Activated CD8-positive, alpha-beta T cell treated with anti-CD3 and anti-CD28 coated beads, Interleukin-2, amount 10 ng/mL, durations not matched to agents 7 days and 5 days (primary cell): ENCODE measurements at regions of chr3 and their contacts with region 1.

Region 1: DNA sequence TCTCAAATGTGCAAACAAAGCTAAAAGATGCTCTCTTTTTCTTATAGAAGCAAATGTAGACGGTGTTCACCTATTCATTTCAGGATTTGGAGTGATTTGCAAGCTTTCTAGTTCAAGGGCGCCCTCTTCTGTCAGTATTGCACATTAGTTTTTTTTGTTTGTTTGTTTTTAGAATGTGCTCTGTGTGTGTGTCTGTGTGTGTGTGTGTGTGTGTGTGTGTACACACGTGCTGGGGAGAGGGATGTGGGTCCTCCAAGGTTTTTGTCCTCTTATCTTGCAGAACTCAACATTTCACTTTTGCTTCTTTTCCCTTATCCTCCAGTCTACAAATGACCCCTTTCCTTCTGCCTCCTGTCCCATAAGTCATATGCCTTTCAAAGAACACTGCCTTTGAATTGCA is 23.5 kb downstream of the DNAH1 start:
- DNase-seq: peak; percentile 70
- ATAC-seq: peak; percentile 71
- H3K4me3 Mint-ChIP-seq: no peak overlapping the region
- H3K27ac Mint-ChIP-seq: no peak overlapping the region
- H3K4me1 Mint-ChIP-seq: peaks cover 5% of the 10 kb centered on the region
- H3K27me3 Mint-ChIP-seq: no peaks in the 10 kb centered on the region

Region 2: GRCh38 chr3:52231502-52232293 is 107.9 kb before region 1 on chr3:
- CTCF ChIA-PET with region 1: interaction called, 98 read pairs
- POLR2A ChIA-PET with region 1: interaction called, 4 read pairs
- DNase-seq: peak; percentile 89
- ATAC-seq: peak; percentile 88
- H3K4me3 Mint-ChIP-seq: peak overlapping the region; percentile 38
- H3K27ac Mint-ChIP-seq: peak overlapping the region; percentile 77
- H3K4me1 Mint-ChIP-seq: peaks cover 62% of the 10 kb centered on the region
- H3K27me3 Mint-ChIP-seq: no peaks in the 10 kb centered on the region

Region 3: GRCh38 chr3:52253314-52254304 is 86.0 kb before region 1 on chr3:
- CTCF ChIA-PET with region 1: interaction called, 14 read pairs
- POLR2A ChIA-PET with region 1: interaction called, 3 read pairs
- DNase-seq: peak; percentile 90
- ATAC-seq: peak; percentile 88
- H3K4me3 Mint-ChIP-seq: peak overlapping the region; percentile 77
- H3K27ac Mint-ChIP-seq: peak overlapping the region; percentile 99
- H3K4me1 Mint-ChIP-seq: peaks cover 95% of the 10 kb centered on the region
- H3K27me3 Mint-ChIP-seq: no peaks in the 10 kb centered on the region

Region 4: GRCh38 chr3:52291508-52292181 is 48.0 kb before region 1 on chr3:
- CTCF ChIA-PET with region 1: interaction called, 102 read pairs
- POLR2A ChIA-PET with region 1: interaction called, 5 read pairs
- DNase-seq: peak; percentile 70
- ATAC-seq: peak; percentile 23
- H3K4me3 Mint-ChIP-seq: no peak overlapping the region
- H3K27ac Mint-ChIP-seq: peak overlapping the region; percentile 78
- H3K4me1 Mint-ChIP-seq: peaks cover 34% of the 10 kb centered on the region
- H3K27me3 Mint-ChIP-seq: no peaks in the 10 kb centered on the region

Region 5: DNA sequence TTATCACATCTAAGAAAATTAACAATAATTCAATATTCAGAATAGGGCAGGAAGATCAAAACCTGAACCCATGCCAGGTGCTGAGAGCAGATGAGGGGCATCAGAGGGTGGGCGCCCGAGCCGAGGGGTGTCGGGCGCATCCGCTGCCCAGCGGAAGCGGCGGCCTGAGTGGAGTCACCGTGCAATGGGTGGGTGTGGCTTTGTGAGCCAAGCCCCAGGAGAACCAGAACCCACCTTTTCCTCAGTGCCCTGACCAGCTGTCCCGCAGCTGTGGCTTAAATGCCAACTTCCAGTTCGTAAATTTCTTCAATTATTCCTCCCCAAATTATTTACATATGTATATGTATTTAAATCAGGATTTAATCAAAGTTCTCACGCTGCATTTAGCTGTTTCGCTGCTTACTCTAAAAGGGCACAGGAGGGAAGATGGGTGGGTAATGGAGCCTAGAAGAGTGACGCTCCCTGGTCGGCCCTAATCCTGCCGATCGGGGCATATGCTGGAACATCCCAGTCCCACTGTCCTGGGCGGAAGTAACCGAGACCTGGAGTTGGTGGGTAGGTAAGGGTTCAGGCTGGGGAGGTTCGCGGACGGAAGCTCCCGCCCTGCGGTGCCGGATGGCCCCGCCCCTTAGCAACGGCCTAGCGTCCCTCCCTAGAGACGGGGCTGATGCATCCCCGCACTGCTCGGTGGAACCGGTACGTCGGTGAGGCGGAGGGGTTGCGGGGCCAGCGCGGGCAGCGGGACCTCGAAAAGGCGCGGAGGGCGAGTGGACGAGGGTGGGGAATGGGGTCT is 22.2 kb before region 1 on chr3:
- CTCF ChIA-PET with region 1: interaction called, 41 read pairs
- POLR2A ChIA-PET with region 1: no interaction called
- DNase-seq: peak; percentile 77
- ATAC-seq: peak; percentile 97
- H3K4me3 Mint-ChIP-seq: peak overlapping the region; percentile 31
- H3K27ac Mint-ChIP-seq: no peak overlapping the region
- H3K4me1 Mint-ChIP-seq: peaks cover 25% of the 10 kb centered on the region
- H3K27me3 Mint-ChIP-seq: no peaks in the 10 kb centered on the region

Region 6: DNA sequence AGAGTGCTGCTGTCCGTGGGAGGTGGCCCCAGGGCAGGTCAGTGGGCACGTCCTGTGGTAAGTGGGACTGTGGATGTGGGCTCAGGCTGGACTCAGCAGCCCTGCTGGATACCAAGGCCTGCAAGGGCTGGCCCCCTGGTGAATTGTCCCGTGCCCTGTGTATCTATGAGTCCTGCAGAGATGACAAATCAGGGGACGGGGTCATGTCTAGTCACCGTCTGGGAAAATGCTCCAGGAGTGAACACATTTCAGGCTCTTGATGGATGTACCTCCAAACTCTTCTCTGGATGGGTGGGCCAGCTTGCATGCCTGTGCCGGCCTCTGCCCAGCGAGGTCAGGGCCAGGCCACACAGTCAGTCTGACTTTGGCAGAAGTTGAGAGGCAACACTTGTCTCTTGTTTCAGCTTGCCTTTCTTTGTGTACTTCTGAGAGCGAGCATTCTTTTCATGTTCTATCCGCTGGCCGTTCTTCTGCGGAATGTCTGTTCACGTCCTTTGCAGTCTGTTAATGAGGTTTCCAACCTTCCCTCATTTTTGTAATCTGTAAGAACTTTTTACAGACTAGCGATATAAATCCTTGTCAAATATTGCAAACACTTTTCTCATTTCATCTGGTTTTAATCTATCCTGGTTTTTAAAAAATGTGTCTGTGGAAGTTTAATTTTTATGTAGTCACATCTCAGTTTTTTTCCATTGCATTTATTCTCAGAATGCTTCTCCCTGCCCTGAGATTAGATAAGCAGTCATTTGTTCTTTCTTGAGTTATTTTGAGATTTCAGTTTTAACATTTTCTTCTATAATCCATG is 144.2 kb after region 1 on chr3:
- CTCF ChIA-PET with region 1: no interaction called
- POLR2A ChIA-PET with region 1: no interaction called
- DNase-seq: no peak
- ATAC-seq: no peak
- H3K4me3 Mint-ChIP-seq: no peak overlapping the region
- H3K27ac Mint-ChIP-seq: no peak overlapping the region
- H3K4me1 Mint-ChIP-seq: no peaks in the 10 kb centered on the region
- H3K27me3 Mint-ChIP-seq: no peaks in the 10 kb centered on the region

Region 7: GRCh38 chr3:52544937-52545336 is 205.3 kb after region 1 on chr3:
- CTCF ChIA-PET with region 1: no interaction called
- POLR2A ChIA-PET with region 1: no interaction called
- DNase-seq: no peak
- ATAC-seq: no peak
- H3K4me3 Mint-ChIP-seq: no peak overlapping the region
- H3K27ac Mint-ChIP-seq: no peak overlapping the region
- H3K4me1 Mint-ChIP-seq: peaks cover 16% of the 10 kb centered on the region
- H3K27me3 Mint-ChIP-seq: no peaks in the 10 kb centered on the region